Activated CD4-positive, alpha-beta T cell treated with anti-CD3 and anti-CD28 coated beads, Interleukin-2, amount 10 ng/mL, durations not matched to agents 24 days and 14 days (primary cell): ENCODE measurements at regions of chrX and their contacts with region 1.

Region 1: DNA sequence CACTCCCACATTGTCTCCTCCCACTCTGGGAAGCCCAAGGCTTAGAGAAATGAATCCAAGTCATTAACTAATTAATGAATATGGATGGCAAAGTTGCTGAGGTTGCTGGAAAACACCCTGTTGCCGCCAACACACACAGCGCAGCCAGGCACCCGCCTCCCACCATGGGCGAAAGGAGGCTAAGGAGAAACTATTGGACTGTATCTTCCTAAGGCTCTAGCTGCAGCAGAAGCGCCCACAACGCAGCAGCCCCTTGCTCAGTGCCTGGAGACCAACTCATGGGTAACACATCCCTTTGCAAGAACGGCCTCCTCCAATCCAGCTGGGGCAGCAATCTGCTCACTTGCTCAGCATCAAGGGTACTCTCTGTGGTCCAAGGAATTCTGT is 34.2 kb downstream of the TSC22D3 start:
- DNase-seq: no peak
- H3K4me3 Mint-ChIP-seq: peak overlapping the region; percentile 89
- H3K27ac Mint-ChIP-seq: peak overlapping the region; percentile 99
- H3K4me1 Mint-ChIP-seq: peaks cover 15% of the 10 kb centered on the region
- H3K27me3 Mint-ChIP-seq: peaks cover 2% of the 10 kb centered on the region

Region 2: DNA sequence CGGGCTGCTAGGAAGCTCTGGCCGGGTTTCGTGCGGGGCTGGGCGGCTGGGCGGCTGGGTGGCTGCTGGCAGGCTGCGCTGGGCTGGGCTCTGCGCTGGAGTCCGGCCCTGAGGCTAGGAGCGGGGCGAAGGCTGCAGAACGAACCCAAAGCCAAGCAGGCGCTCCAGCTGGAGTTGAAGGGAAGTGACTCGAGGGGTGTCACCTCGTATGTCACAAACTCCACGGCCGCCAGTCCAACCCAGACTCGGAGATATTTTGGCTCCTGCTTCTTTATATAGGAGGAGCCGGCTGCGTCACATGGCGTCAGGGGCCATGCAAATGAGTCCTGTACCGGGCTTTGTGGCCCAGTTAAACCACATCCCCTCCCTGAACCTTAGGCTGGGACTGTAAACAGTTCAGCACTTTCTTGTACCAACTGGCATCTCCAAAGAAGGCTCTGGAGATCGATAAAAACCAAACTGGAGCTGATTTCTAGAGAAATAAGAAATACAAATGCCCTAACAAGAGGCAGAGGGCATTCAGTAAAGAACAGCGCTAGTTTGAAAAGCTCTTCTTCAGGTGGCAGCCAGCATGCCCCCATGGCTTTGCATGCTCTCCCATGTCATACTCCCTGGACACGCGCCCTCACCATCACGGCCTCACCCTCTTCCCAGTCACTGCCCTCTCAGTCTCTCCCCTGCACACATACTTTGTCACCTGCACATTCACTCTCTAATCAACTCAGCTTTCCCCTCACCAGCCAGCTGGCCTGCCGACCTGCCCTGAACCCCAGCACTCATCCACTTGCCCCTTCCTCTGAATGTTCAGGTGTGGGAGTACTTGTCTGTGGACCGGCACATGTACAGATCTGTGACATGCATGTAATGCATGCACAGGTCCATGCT is 24.3 kb before region 1 on chrX:
- intact Hi-C with region 1: loop called (anchors 1 kb)
- DNase-seq: peak; percentile 96
- H3K4me3 Mint-ChIP-seq: peak overlapping the region; percentile 95
- H3K27ac Mint-ChIP-seq: peak overlapping the region; percentile 91
- H3K4me1 Mint-ChIP-seq: peaks cover 36% of the 10 kb centered on the region
- H3K27me3 Mint-ChIP-seq: no peaks in the 10 kb centered on the region